Motor neuron (in vitro differentiated cells): ENCODE measurements at regions of chr12 and their contacts with region 1.

Region 1: GRCh38 chr12:30862486-30862885 is 64.1 kb upstream of the TSPAN11 start:
- ATAC-seq: peak in 2 of 8 experiments; percentile 19 to 96
- H3K4me3 ChIP-seq: no peak overlapping the region
- H3K27ac ChIP-seq: no peak overlapping the region
- H3K4me1 ChIP-seq: no peaks in the 10 kb centered on the region

Region 2: GRCh38 chr12:30473274-30473673 is 389.2 kb before region 1 on chr12:
- in situ Hi-C with region 1: no loop called
- ATAC-seq: peak in 3 of 8 experiments; percentile 46 to 81 (median 62)
- H3K4me3 ChIP-seq: no peak overlapping the region
- H3K27ac ChIP-seq: no peak overlapping the region
- H3K4me1 ChIP-seq: no peaks in the 10 kb centered on the region

Region 3: GRCh38 chr12:30985814-30986452 is 123.4 kb after region 1 on chr12:
- in situ Hi-C with region 1: loop called in 5 of 9 experiments (anchors 10 to 25 kb)
- ATAC-seq: peak; percentile 33 to 81 (median 53)
- H3K4me3 ChIP-seq: no peak overlapping the region
- H3K27ac ChIP-seq: no peak overlapping the region
- H3K4me1 ChIP-seq: peaks cover 3 to 9% of the 10 kb centered on the region in 2 donors

Region 4: DNA sequence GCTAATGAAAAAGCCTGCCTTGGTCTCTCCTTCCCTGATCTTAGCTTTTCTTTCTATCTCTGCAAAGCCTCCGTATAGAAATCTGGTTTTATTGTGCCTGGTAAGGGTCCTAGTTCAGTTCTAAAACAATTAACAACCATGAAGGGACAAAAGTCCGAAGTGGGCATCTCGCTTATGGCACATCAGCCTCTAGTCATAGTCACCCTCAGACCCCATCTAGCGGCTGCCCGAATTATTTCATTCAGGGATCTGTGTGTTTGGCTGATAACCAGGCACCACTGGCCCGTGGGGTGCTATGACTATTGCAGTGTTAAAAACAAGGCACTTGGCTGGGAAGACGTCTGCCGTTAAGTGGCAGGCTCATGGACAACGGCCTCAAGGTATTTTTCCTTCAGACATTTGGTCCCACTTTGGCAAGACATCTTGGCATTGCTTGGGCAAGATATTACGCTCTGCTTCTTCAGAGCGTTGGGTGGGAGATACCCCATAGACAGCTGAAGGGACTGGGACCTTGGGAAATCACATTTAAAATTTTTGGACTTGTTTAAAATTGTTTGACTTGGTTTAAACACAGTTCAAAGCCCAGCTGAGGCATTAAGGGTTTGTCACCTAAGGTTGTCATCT is 376.4 kb after region 1 on chr12:
- in situ Hi-C with region 1: loop called in 2 of 9 experiments (anchors 25 kb)
- ATAC-seq: peak; percentile 62 to 88 (median 72)
- H3K4me3 ChIP-seq: no peak overlapping the region
- H3K27ac ChIP-seq: no peak overlapping the region
- H3K4me1 ChIP-seq: peaks cover 0 to 4% of the 10 kb centered on the region in 2 donors